Left ventricle myocardium superior (tissue), 1 donor: ENCODE measurements at regions of chr13 and their contacts with region 1.

Region 1: GRCh38 chr13:57857945-57858344 is 226.4 kb downstream of the PCDH17 start:
- DNase-seq: no peak
- ATAC-seq: no peak

Region 2: GRCh38 chr13:57624565-57625435 is 233.1 kb before region 1 on chr13:
- intact Hi-C with region 1: loop called (anchors 5 kb)
- DNase-seq: no peak
- ATAC-seq: peak; percentile 45